CD4-positive, alpha-beta T cell (primary cell): ENCODE measurements at regions of chr2 and their contacts with region 1.

Region 1: GRCh38 chr2:138827426-138828054 is 47.4 kb upstream of the NXPH2 start:
- DNase-seq: peak in 4 of 14 experiments; percentile 12 to 69 (median 62)
- ATAC-seq: no peak
- H3K4me3 ChIP-seq: no peak overlapping the region
- H3K4me3 Mint-ChIP-seq: no peak overlapping the region
- H3K27ac ChIP-seq: no peak overlapping the region
- H3K27ac Mint-ChIP-seq: no peak overlapping the region
- H3K4me1 ChIP-seq: no peaks in the 10 kb centered on the region
- H3K4me1 Mint-ChIP-seq: no peaks in the 10 kb centered on the region
- H3K27me3 ChIP-seq: no peaks in the 10 kb centered on the region
- H3K27me3 Mint-ChIP-seq: peaks cover 4% of the 10 kb centered on the region
- CTCF ChIP-seq: peak; percentile 76

Region 2: GRCh38 chr2:137865954-137866540 is 961.5 kb before region 1 on chr2:
- CTCF ChIA-PET with region 1: interaction called, 11 read pairs
- POLR2A ChIA-PET with region 1: no interaction called
- intact Hi-C with region 1: loop called (anchors 1 to 2 kb)
- DNase-seq: peak; percentile 11 to 55 (median 32)
- ATAC-seq: no peak
- H3K4me3 ChIP-seq: no peak overlapping the region
- H3K4me3 Mint-ChIP-seq: no peak overlapping the region
- H3K27ac ChIP-seq: no peak overlapping the region
- H3K27ac Mint-ChIP-seq: no peak overlapping the region
- H3K4me1 ChIP-seq: no peaks in the 10 kb centered on the region
- H3K4me1 Mint-ChIP-seq: no peaks in the 10 kb centered on the region
- H3K27me3 ChIP-seq: no peaks in the 10 kb centered on the region
- H3K27me3 Mint-ChIP-seq: peaks cover 10% of the 10 kb centered on the region
- CTCF ChIP-seq: peak; percentile 54

Region 3: GRCh38 chr2:137910641-137911040 is 916.9 kb before region 1 on chr2:
- CTCF ChIA-PET with region 1: interaction called, 3 read pairs
- POLR2A ChIA-PET with region 1: no interaction called
- intact Hi-C with region 1: loop called in 1 of 2 experiments (anchors 2 kb)
- DNase-seq: peak in 2 of 14 experiments; percentile 2 to 4
- ATAC-seq: no peak
- H3K4me3 ChIP-seq: no peak overlapping the region
- H3K4me3 Mint-ChIP-seq: no peak overlapping the region
- H3K27ac ChIP-seq: no peak overlapping the region
- H3K27ac Mint-ChIP-seq: no peak overlapping the region
- H3K4me1 ChIP-seq: no peaks in the 10 kb centered on the region
- H3K4me1 Mint-ChIP-seq: no peaks in the 10 kb centered on the region
- H3K27me3 ChIP-seq: no peaks in the 10 kb centered on the region
- H3K27me3 Mint-ChIP-seq: peaks cover 6% of the 10 kb centered on the region
- CTCF ChIP-seq: no peak

Region 4: GRCh38 chr2:137947728-137948336 is 879.7 kb before region 1 on chr2:
- CTCF ChIA-PET with region 1: no interaction called
- POLR2A ChIA-PET with region 1: no interaction called
- intact Hi-C with region 1: loop called in 1 of 2 experiments (anchors 5 kb)
- DNase-seq: peak in 10 of 14 experiments; percentile 1 to 48 (median 10)
- ATAC-seq: no peak
- H3K4me3 ChIP-seq: no peak overlapping the region
- H3K4me3 Mint-ChIP-seq: no peak overlapping the region
- H3K27ac ChIP-seq: no peak overlapping the region
- H3K27ac Mint-ChIP-seq: no peak overlapping the region
- H3K4me1 ChIP-seq: no peaks in the 10 kb centered on the region
- H3K4me1 Mint-ChIP-seq: no peaks in the 10 kb centered on the region
- H3K27me3 ChIP-seq: no peaks in the 10 kb centered on the region
- H3K27me3 Mint-ChIP-seq: no peaks in the 10 kb centered on the region
- CTCF ChIP-seq: no peak

Region 5: GRCh38 chr2:138010890-138011289 is 816.6 kb before region 1 on chr2:
- CTCF ChIA-PET with region 1: no interaction called
- POLR2A ChIA-PET with region 1: no interaction called
- intact Hi-C with region 1: no loop called
- DNase-seq: no peak
- ATAC-seq: no peak
- H3K4me3 ChIP-seq: no peak overlapping the region
- H3K4me3 Mint-ChIP-seq: no peak overlapping the region
- H3K27ac ChIP-seq: no peak overlapping the region
- H3K27ac Mint-ChIP-seq: no peak overlapping the region
- H3K4me1 ChIP-seq: no peaks in the 10 kb centered on the region
- H3K4me1 Mint-ChIP-seq: no peaks in the 10 kb centered on the region
- H3K27me3 ChIP-seq: no peaks in the 10 kb centered on the region
- H3K27me3 Mint-ChIP-seq: no peaks in the 10 kb centered on the region
- CTCF ChIP-seq: no peak

Region 6: DNA sequence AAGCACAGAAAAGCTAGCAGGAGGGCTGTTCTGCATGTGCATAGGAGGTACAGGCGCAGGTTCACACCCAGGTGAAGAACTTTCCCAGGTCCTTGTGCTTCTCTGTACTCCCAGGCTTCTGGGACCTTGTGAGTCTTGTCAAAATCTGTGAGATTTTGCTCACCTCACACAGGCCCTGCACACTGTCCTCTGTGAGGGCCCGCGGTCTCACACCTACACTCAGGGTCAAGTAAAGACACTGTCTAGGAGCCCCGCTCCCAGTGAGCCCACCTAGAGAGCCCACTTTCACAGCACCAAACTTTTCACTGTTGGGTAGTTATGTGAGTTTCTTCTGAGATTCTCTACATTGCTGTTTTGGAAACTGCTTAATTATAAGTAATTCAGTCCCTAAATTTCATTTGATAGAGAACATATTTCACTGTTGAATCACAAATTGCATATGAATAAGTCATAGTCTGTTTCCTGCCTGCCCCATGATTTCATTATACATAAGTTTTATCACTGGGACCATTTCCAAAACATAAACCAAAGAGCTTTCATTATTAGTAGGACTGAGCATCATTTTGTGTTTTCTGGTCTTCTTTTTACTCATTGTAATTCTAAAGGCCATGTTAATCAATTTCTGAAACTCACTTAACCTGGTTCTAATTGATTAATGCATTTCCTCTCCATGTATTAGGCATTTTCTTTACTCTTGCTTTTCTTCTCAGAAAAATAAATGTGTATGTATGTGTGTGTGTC is 560.2 kb before region 1 on chr2:
- CTCF ChIA-PET with region 1: no interaction called
- POLR2A ChIA-PET with region 1: no interaction called
- intact Hi-C with region 1: loop called in 1 of 2 experiments (anchors 5 kb)
- DNase-seq: no peak
- ATAC-seq: no peak
- H3K4me3 ChIP-seq: no peak overlapping the region
- H3K4me3 Mint-ChIP-seq: no peak overlapping the region
- H3K27ac ChIP-seq: no peak overlapping the region
- H3K27ac Mint-ChIP-seq: no peak overlapping the region
- H3K4me1 ChIP-seq: no peaks in the 10 kb centered on the region
- H3K4me1 Mint-ChIP-seq: no peaks in the 10 kb centered on the region
- H3K27me3 ChIP-seq: no peaks in the 10 kb centered on the region
- H3K27me3 Mint-ChIP-seq: no peaks in the 10 kb centered on the region
- CTCF ChIP-seq: no peak